ENCODE measurements at regions of chr16 and their contacts with region 1.

Region 1: DNA sequence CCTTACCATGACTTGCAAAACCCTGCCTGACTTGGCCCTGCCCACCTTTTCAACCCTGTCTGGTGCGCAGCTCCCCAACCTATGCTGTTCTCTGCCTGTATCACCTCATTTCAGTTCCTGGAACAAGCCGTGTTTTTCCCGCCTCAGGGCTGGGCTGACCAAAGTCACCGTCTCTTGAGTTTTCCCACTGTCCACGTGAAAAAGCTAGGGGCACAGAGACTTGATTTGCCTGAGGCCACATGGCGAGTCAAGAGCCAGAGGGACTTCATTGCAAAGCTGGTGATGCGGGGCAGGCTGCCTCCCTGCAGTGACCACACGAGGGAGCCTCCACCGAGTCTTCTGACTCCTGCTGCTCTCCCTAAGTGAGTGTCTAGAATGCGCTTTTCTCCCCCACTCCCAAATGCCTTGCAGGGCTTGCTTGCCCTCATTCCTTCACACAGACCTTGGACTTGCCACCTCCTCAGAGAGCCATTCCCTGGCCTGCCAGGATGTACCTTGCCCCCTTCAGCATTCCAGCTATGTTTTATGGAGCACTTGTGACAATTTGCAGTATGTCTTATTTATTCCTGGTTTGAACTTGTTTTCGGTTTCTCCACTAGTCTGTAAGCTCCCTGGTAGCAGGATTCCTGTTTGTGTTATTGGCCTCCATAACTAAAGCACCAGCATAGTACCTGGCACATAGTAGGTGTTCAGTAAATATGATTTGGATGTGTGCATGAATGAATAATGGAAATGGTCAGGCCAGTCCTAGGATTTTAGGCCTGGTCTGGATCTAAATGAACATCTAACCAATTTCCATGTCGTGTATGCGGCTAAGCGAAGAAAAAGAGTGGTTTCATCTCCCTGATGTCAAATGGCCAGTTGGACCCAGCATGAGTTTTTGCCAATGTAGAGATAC is 252.3 kb downstream of the SNX29 start:
- DNase-seq: peak; percentile 20
- H3K4me3 ChIP-seq: no peak overlapping the region
- H3K27ac ChIP-seq: no peak overlapping the region
- H3K27me3 ChIP-seq: no peaks in the 10 kb centered on the region
- CTCF ChIP-seq: peak; percentile 86

Region 2: GRCh38 chr16:11896777-11897176 is 332.1 kb before region 1 on chr16:
- CTCF ChIA-PET with region 1: no interaction called
- POLR2A ChIA-PET with region 1: no interaction called
- DNase-seq: peak; percentile 36
- H3K4me3 ChIP-seq: no peak overlapping the region
- H3K27ac ChIP-seq: peak overlapping the region; percentile 22
- H3K27me3 ChIP-seq: no peaks in the 10 kb centered on the region
- CTCF ChIP-seq: no peak

Region 3: GRCh38 chr16:12141073-12141951 is 87.5 kb before region 1 on chr16:
- CTCF ChIA-PET with region 1: interaction called, 12 read pairs
- POLR2A ChIA-PET with region 1: no interaction called
- DNase-seq: no peak
- H3K4me3 ChIP-seq: no peak overlapping the region
- H3K27ac ChIP-seq: no peak overlapping the region
- H3K27me3 ChIP-seq: no peaks in the 10 kb centered on the region
- CTCF ChIP-seq: no peak

Region 4: GRCh38 chr16:12203780-12204351 is 25.0 kb before region 1 on chr16:
- CTCF ChIA-PET with region 1: interaction called, 16 read pairs
- POLR2A ChIA-PET with region 1: no interaction called
- DNase-seq: no peak
- H3K4me3 ChIP-seq: no peak overlapping the region
- H3K27ac ChIP-seq: no peak overlapping the region
- H3K27me3 ChIP-seq: no peaks in the 10 kb centered on the region
- CTCF ChIP-seq: no peak

Region 5: GRCh38 chr16:12215277-12216105 is 13.4 kb before region 1 on chr16:
- CTCF ChIA-PET with region 1: interaction called, 14 read pairs
- POLR2A ChIA-PET with region 1: interaction called, 4 read pairs
- DNase-seq: no peak
- H3K4me3 ChIP-seq: no peak overlapping the region
- H3K27ac ChIP-seq: no peak overlapping the region
- H3K27me3 ChIP-seq: no peaks in the 10 kb centered on the region
- CTCF ChIP-seq: peak; percentile 52

Region 6: DNA sequence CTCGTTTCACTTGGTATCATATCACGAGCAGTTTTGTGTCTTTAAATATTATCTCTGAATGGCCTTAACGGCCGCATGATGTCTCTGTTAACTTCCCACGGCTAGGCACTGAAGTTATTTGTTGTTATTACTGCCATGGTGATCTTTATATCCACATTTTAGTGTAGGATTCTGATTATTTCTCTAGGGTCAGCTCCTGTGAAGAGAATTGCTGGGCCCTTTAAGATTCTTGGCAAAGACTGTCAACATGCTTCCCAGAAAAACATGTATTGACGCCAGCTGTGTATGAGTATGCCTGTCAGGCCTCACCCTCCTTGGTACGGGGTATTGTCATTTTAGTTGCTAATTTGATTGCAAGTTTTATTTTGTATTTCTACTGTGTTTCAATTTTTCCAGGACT is 11.2 kb after region 1 on chr16:
- CTCF ChIA-PET with region 1: interaction called, 15 read pairs
- POLR2A ChIA-PET with region 1: no interaction called
- DNase-seq: no peak
- H3K4me3 ChIP-seq: no peak overlapping the region
- H3K27ac ChIP-seq: no peak overlapping the region
- H3K27me3 ChIP-seq: no peaks in the 10 kb centered on the region
- CTCF ChIP-seq: no peak

Region 7: DNA sequence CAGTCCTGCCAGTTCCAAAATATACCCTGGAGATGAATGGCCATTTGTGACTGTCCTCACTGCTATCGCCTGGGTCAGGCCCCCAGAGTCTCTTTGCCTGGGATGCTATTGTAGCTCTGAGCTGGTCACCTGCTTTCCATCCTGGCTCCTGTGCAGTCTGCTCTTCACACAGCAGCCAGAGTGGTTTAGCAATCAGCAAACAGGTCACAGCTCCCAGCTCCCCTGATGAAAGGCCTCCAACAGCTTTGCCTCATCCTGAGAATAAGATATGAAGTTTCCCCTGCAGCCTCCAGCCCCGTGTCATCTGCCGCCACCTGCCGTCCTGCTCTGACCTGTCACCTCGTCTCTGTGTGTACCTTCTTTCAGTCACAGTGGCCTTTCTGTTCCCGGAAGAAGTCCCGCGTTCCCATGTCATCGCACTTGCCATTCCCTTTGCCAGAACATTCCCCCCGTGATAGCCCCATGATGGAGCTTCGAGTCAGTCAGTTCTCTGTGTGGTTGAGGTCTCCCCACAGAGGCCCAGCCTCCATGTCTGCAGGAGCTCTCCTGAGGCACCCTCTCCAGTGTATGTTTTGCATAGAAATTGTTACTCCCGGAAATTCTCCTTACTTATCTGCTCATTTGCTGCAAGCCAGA is 29.2 kb after region 1 on chr16:
- CTCF ChIA-PET with region 1: interaction called, 32 read pairs
- POLR2A ChIA-PET with region 1: interaction called, 4 read pairs
- DNase-seq: no peak
- H3K4me3 ChIP-seq: no peak overlapping the region
- H3K27ac ChIP-seq: no peak overlapping the region
- H3K27me3 ChIP-seq: no peaks in the 10 kb centered on the region
- CTCF ChIP-seq: no peak

Measured in AG04450 (cell line).